Naive thymus-derived CD8-positive, alpha-beta T cell (primary cell): ENCODE measurements at regions of chr7 and their contacts with region 1.

Region 1: DNA sequence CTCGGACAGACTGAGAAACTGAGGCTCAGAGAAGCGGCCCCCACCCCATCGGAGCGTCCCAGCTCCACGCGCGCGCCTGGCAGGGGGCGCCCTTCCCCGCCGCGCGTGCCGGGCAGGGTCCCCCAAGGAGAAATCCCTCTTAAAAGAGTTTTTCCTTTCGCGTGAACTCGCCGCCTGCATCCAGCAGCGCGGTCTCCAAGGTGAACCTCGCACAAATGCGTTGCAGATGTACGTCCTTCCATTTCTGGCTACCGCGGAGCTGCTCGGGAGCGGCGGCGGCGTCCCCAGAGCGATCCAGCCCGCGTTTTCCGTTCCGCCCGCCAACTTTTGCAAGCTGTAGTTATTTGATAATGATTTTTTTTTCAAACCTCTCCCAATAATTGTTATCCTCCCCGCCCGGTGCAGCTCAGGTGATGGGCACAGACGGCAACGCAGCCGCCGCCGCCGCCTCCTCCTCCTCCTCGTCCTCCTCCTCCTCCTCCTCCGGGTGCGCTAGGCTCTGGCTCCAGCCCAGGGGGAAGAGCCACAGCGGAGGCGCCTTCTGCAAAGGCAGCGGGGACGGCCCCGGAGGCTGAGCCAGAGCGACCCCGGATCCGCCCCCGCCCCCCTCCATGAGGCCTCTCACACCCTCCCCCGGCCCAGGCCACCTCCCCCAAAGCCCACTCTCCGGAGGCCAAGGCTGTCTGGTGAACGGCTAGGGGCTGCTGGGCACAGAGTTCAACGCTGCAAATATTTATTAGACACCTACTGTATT is 74.0 kb upstream of the CUX1 start:
- DNase-seq: peak; percentile 52 to 82 (median 72)
- ATAC-seq: peak; percentile 80 to 82
- H3K4me3 Mint-ChIP-seq: peak overlapping the region; percentile 79 to 91 (median 84)
- H3K27ac Mint-ChIP-seq: peak overlapping the region in 8 of 10 donors; percentile 11 to 85 (median 40)
- H3K4me1 Mint-ChIP-seq: peaks cover 12 to 50% (median 39%) of the 10 kb centered on the region in 4 donors
- H3K27me3 Mint-ChIP-seq: no peaks in the 10 kb centered on the region

Region 2: DNA sequence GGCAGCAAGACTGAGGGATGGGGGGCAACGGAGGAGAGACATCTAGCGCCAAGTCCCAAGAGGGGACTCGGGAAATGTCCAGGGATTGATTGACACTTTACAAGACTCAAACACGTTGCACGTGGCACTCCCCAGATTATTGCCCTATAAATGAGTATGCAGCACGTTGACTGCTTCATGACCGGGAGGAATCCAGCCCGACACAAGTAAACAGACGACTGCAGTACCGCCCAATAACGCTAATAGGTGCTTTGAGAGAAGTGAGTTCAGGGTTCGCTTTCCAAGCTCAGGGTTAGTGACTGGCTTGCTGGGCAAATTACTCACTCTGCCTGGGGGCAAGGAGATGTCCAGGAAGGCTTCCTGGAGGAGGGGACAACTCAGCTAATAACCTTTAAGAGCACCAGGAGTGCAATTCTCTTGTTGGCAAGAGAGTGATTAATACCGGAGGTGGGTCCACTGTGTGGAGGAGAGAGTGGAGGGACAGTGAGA is 41.0 kb before region 1 on chr7:
- POLR2A ChIA-PET with region 1: no interaction called
- DNase-seq: no peak
- ATAC-seq: no peak
- H3K4me3 Mint-ChIP-seq: no peak overlapping the region
- H3K27ac Mint-ChIP-seq: no peak overlapping the region
- H3K4me1 Mint-ChIP-seq: peaks cover 0 to 2% (median 0%) of the 10 kb centered on the region in 4 donors
- H3K27me3 Mint-ChIP-seq: peaks cover 0 to 1% (median 0%) of the 10 kb centered on the region in 5 donors

Region 3: GRCh38 chr7:101754424-101755159 is 11.2 kb after region 1 on chr7:
- POLR2A ChIA-PET with region 1: interaction called, 13 read pairs
- DNase-seq: peak in 2 of 10 donors; percentile 15 to 20
- ATAC-seq: peak; percentile 46 to 49
- H3K4me3 Mint-ChIP-seq: peak overlapping the region; percentile 75 to 90 (median 85)
- H3K27ac Mint-ChIP-seq: peak overlapping the region; percentile 9 to 92 (median 79)
- H3K4me1 Mint-ChIP-seq: peaks cover 5 to 13% (median 12%) of the 10 kb centered on the region in 4 donors
- H3K27me3 Mint-ChIP-seq: no peaks in the 10 kb centered on the region

Region 4: DNA sequence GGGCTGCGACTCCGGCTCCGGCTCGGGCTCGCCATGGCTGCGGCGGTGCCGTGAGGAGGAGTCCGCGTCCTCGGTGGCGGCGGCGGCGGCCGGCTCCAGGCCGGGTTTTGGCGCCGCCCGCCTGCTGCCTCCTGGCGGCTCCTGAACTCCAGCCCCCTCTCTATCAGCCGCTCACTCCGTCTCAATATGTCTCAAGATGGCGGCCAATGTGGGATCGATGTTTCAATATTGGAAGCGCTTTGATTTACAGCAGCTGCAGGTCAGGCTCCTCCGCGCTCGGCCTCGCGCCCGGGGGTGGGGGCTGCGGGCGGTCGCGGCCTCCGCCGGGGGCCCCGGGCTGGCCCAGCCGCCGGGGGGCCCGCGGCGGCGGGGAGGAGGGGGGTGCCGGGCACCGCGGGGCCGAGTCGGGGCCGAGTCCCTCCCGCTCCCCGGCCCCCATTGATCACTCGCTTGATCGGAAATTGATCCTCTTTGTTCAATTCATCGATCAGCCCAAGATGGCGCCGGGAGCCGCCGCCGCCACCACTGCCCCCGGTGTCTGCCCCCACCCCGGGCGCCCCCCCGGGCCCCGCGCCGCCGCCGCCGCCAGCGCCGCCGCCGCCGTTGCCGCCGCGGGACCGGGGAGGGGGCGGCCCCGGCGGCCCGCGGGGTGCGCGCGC is 72.5 kb after region 1 on chr7:
- POLR2A ChIA-PET with region 1: interaction called, 19 read pairs
- DNase-seq: peak; percentile 60 to 83 (median 72)
- ATAC-seq: peak; percentile 74 to 75
- H3K4me3 Mint-ChIP-seq: peak overlapping the region; percentile 72 to 94 (median 80)
- H3K27ac Mint-ChIP-seq: peak overlapping the region in 5 of 10 donors; percentile 51 to 84 (median 78)
- H3K4me1 Mint-ChIP-seq: peaks cover 20 to 39% (median 37%) of the 10 kb centered on the region in 4 donors
- H3K27me3 Mint-ChIP-seq: no peaks in the 10 kb centered on the region

Region 5: DNA sequence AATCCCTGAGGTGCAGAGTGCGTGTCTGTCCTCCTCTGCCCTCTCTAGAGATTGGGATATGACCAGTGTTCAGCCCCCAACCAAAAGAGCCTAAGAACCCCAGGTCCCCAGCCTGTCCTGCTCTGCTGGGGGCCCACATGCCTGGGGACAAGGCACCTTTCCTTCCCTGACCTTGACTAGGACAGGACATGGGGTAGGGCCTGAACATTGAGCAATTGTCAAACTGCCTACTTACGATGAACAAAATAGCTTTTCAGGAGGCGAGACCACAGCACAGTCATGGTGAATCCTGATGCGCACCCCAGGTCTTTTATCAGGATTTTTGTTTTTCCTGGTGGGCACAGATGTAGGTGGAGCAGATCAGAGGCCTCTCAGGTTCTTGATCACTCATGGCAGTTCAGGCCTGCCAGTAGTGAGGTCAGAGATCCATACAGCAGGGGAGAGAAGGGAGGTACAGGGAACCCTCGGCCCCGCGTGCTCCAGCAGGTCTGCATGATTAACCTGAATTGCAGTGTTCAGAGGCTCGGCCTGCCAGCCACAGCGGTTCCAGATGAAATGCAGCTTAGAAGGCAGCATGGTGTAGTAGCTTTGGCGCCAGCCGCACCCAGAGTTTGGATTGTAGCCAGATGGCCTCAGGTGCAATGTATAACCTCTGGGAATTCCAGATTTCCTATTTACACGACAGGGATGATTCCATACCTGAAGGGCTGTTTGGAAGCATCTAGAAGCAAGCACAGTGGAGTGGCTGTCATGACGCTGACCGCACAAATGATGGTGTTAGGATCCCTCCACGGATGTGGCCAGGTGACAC is 265.3 kb after region 1 on chr7:
- POLR2A ChIA-PET with region 1: no interaction called
- DNase-seq: no peak
- ATAC-seq: no peak
- H3K4me3 Mint-ChIP-seq: no peak overlapping the region
- H3K27ac Mint-ChIP-seq: peak overlapping the region in 1 of 10 donors; percentile 41
- H3K4me1 Mint-ChIP-seq: peaks cover 0 to 11% (median 1%) of the 10 kb centered on the region in 4 donors
- H3K27me3 Mint-ChIP-seq: no peaks in the 10 kb centered on the region